Panc1 (cell line): ENCODE measurements at regions of chr5 and their contacts with region 1.

Region 1: GRCh38 chr5:177071666-177072385 is 14.9 kb upstream of the FGFR4 start:
- DNase-seq: peak; percentile 82
- ATAC-seq: peak; percentile 95
- H3K4me3 ChIP-seq: no peak overlapping the region
- H3K27ac ChIP-seq: no peak overlapping the region
- H3K4me1 ChIP-seq: no peaks in the 10 kb centered on the region
- H3K27me3 ChIP-seq: no peaks in the 10 kb centered on the region
- CTCF ChIP-seq: peak; percentile 93

Region 2: GRCh38 chr5:177086924-177087706 is 15.3 kb after region 1 on chr5:
- CTCF ChIA-PET with region 1: interaction called, 14 read pairs
- POLR2A ChIA-PET with region 1: no interaction called
- in situ Hi-C with region 1: no loop called
- intact Hi-C with region 1: no loop called
- DNase-seq: no peak
- ATAC-seq: peak; percentile 84
- H3K4me3 ChIP-seq: peak overlapping the region; percentile 47 to 55
- H3K27ac ChIP-seq: no peak overlapping the region
- H3K4me1 ChIP-seq: no peaks in the 10 kb centered on the region
- H3K27me3 ChIP-seq: no peaks in the 10 kb centered on the region
- CTCF ChIP-seq: peak; percentile 83; the same call in 1 of the 2 replicates